HepG2 (cell line): ENCODE measurements at regions of chr4 and their contacts with region 1.

Region 1: DNA sequence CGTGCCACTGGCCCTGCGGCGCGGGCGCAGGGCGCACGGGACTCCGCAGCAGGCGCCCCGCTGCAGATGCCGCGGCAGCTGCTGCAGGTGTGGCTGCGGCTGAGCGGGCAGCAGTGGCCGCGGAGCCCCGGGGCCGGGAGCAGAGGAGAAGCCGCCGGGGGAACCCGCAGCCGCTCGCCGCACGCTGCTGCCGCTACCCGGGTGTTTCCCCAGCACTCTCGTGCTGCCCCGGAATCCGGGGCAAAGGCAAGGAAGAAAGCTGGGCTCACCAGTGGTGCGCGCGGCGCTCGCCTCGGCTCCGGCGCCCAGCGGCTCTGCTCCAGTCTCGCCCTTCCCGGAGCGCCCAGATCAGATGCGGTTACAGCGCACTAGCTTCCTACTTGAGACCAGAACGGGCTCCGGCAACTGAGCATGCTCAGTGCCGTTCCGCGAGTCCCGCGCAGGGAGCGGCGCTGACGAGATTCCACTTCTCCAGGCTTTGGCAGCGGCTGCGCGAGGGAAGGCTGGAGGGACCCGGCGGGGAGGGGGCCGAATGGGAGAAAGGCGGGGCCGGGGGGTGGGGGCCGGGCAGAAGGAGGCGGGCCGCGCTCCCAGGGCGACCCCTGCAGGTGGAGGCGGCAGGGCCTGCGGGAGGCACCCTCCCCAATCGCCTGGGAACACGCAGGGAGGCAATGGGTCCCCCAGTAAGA is at the start of gene APBB2:
- DNase-seq: peak; percentile 94
- ATAC-seq: peak; percentile 85
- H3K4me3 ChIP-seq: peak within 1 kb of the TSS; percentile 81 to 94 (median 93)
- H3K27ac ChIP-seq: peak within 1 kb of the TSS; percentile 80
- H3K4me1 ChIP-seq: peaks cover 44% of the 10 kb centered on the region
- H3K27me3 ChIP-seq: peaks cover 0 to 3% of the 10 kb centered on the region in 2 experiments; a peak in 2 of 5 replicates
- CTCF ChIP-seq: peak; percentile 90
- EP300 ChIP-seq: no peak
- POLR2A ChIP-seq: peak; percentile 79 to 82
- RAD21 ChIP-seq: peak; percentile 76
- total RNA-seq, gene APBB2: 17.0 and 19.7 TPM in 2 replicates

Region 2: GRCh38 chr4:40976343-40976742 is 237.9 kb before region 1 on chr4:
- CTCF ChIA-PET with region 1: interaction called, 26 read pairs
- POLR2A ChIA-PET with region 1: interaction called, 40 read pairs
- in situ Hi-C with region 1: loop called (anchors 5 kb)
- intact Hi-C with region 1: loop called (anchors 1 kb)
- DNase-seq: peak; percentile 57
- ATAC-seq: peak; percentile 66
- H3K4me3 ChIP-seq: no peak overlapping the region
- H3K27ac ChIP-seq: no peak overlapping the region
- H3K4me1 ChIP-seq: no peaks in the 10 kb centered on the region
- H3K27me3 ChIP-seq: no peaks in the 10 kb centered on the region
- CTCF ChIP-seq: peak; percentile 63
- EP300 ChIP-seq: no peak
- POLR2A ChIP-seq: no peak
- RAD21 ChIP-seq: no peak

Region 3: GRCh38 chr4:41120297-41121217 is 93.7 kb before region 1 on chr4:
- CTCF ChIA-PET with region 1: no interaction called
- POLR2A ChIA-PET with region 1: no interaction called
- in situ Hi-C with region 1: loop called (anchors 10 kb)
- intact Hi-C with region 1: no loop called
- DNase-seq: no peak
- ATAC-seq: no peak
- H3K4me3 ChIP-seq: no peak overlapping the region
- H3K27ac ChIP-seq: no peak overlapping the region
- H3K4me1 ChIP-seq: peaks cover 12% of the 10 kb centered on the region
- H3K27me3 ChIP-seq: no peaks in the 10 kb centered on the region
- CTCF ChIP-seq: no peak
- EP300 ChIP-seq: no peak
- POLR2A ChIP-seq: no peak
- RAD21 ChIP-seq: no peak

Region 4: DNA sequence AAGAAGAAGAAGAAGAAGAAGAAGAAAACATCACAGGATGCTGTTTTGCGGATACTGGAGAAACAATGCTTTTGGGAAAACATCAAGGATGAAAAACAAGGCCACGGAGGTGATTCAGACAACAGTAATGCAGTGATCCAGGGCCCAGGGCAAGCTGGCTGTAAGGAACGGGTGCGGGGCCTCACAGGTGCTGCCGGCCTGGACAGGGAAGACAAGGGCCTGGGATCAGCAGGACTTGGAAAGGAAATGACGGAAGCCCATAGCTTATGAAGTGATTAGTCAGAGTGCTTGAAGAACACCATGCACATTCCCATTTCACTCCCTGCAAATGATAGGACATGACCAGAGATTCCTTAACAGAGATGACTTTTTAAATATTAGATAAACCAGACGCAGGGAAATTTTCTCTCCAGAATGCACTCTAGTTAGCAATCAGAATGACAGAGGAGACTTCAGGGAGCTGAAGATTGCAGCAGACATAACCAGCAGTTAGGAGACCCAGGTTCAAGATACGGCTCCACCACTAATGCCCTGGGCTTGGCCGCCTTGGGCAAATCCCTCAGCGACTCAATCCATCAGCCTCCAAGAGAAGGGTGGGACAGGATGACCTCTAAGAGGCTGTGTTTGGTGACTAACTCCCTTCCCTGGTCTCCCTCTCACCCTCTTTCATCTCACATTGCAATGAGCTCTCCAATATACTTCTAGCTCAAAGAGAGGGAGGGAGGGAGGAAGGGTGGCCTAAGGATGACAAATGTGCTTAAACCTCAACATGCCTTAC is 54.1 kb before region 1 on chr4:
- CTCF ChIA-PET with region 1: no interaction called
- POLR2A ChIA-PET with region 1: interaction called, 3 read pairs
- in situ Hi-C with region 1: no loop called
- intact Hi-C with region 1: loop called (anchors 5 kb)
- DNase-seq: no peak
- ATAC-seq: no peak
- H3K4me3 ChIP-seq: no peak overlapping the region
- H3K27ac ChIP-seq: peak overlapping the region; percentile 14
- H3K4me1 ChIP-seq: peaks cover 100% of the 10 kb centered on the region
- H3K27me3 ChIP-seq: no peaks in the 10 kb centered on the region
- CTCF ChIP-seq: no peak
- EP300 ChIP-seq: no peak
- POLR2A ChIP-seq: no peak
- RAD21 ChIP-seq: no peak